Left colon (tissue), 2 donors: ENCODE measurements at regions of chr5 and their contacts with region 1.

Region 1: DNA sequence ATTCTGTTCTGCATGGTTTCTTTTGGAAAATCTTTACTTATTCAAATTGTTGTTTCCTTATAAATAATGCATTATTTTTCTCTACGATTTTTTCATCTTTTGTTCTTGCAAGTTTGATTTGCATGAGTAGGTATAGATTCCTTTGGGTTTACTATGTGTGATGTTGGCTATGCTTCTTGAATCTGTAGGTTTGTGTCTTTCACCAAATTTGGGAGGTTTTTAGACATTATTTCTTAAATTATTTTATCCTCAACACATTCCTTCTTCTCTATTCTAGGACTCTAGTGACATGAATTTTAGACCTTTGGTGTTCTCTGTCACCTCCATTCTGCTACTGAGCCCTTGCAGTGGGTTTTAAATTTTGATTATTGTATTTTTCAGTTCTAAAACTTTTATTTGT is 219.0 kb downstream of the CWC27 start:
- DNase-seq: no peak
- ATAC-seq: no peak

Region 2: GRCh38 chr5:65113771-65114170 is 126.0 kb after region 1 on chr5:
- intact Hi-C with region 1: loop called in 1 of 2 experiments (anchors 10 kb)
- DNase-seq: no peak
- ATAC-seq: no peak